Mammary epithelial cell (primary cell): ENCODE measurements at regions of chr14 and their contacts with region 1.

Region 1: GRCh38 chr14:62126879-62127478 is 364.8 kb downstream of the SNAPC1 start:
- DNase-seq: peak; percentile 43
- H3K4me3 ChIP-seq: no peak overlapping the region
- H3K27ac ChIP-seq: no peak overlapping the region
- H3K4me1 ChIP-seq: no peaks in the 10 kb centered on the region
- H3K27me3 ChIP-seq: peaks cover 7% of the 10 kb centered on the region
- CTCF ChIP-seq: peak; percentile 76 to 83

Region 2: GRCh38 chr14:61456720-61457119 is 670.3 kb before region 1 on chr14:
- CTCF ChIA-PET with region 1: no interaction called
- dilution Hi-C with region 1: no loop called
- in situ Hi-C with region 1: loop called (anchors 10 to 25 kb)
- intact Hi-C with region 1: loop called (anchors 1 kb)
- DNase-seq: peak; percentile 49
- H3K4me3 ChIP-seq: no peak overlapping the region
- H3K27ac ChIP-seq: no peak overlapping the region
- H3K4me1 ChIP-seq: peaks cover 10% of the 10 kb centered on the region
- H3K27me3 ChIP-seq: no peaks in the 10 kb centered on the region
- CTCF ChIP-seq: peak; percentile 81 to 85

Region 3: DNA sequence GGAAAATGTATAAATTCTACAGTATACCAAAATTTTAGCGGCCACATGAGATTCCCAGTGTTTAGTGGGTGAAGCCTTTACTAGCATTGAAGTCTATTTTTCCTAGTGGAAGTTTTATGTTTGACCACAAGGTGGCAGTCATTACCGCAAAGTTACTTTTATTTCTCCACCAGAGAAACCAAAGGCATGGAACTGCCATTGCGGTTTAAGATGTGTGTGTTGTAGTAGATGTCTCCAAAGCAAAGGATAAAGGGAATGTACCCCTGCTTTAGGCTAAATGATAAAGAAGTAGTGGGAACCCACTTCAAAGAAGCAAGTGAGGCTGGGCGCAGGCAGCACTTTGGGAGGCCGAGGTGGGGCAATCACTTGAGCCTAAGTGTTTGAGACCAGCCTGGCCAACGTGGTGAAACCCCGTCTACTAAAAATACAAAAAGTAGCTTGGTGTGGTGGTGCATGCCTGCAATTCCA is 665.1 kb before region 1 on chr14:
- CTCF ChIA-PET with region 1: no interaction called
- dilution Hi-C with region 1: no loop called
- in situ Hi-C with region 1: loop called (anchors 10 to 25 kb)
- intact Hi-C with region 1: loop called (anchors 1 kb)
- DNase-seq: peak; percentile 63
- H3K4me3 ChIP-seq: no peak overlapping the region
- H3K27ac ChIP-seq: peak overlapping the region; percentile 28
- H3K4me1 ChIP-seq: peaks cover 37% of the 10 kb centered on the region
- H3K27me3 ChIP-seq: no peaks in the 10 kb centered on the region
- CTCF ChIP-seq: peak; percentile 53 to 59

Region 4: GRCh38 chr14:61797309-61797708 is 329.7 kb before region 1 on chr14:
- CTCF ChIA-PET with region 1: interaction called, 10 read pairs
- dilution Hi-C with region 1: no loop called
- in situ Hi-C with region 1: no loop called
- intact Hi-C with region 1: no loop called
- DNase-seq: no peak
- H3K4me3 ChIP-seq: no peak overlapping the region
- H3K27ac ChIP-seq: no peak overlapping the region
- H3K4me1 ChIP-seq: no peaks in the 10 kb centered on the region
- H3K27me3 ChIP-seq: no peaks in the 10 kb centered on the region
- CTCF ChIP-seq: no peak

Region 5: GRCh38 chr14:61894452-61895077 is 232.4 kb before region 1 on chr14:
- CTCF ChIA-PET with region 1: interaction called, 3 read pairs
- dilution Hi-C with region 1: no loop called
- in situ Hi-C with region 1: loop called in 1 of 2 experiments (anchors 10 kb)
- intact Hi-C with region 1: loop called (anchors 1 kb)
- DNase-seq: peak; percentile 56
- H3K4me3 ChIP-seq: no peak overlapping the region
- H3K27ac ChIP-seq: no peak overlapping the region
- H3K4me1 ChIP-seq: no peaks in the 10 kb centered on the region
- H3K27me3 ChIP-seq: no peaks in the 10 kb centered on the region
- CTCF ChIP-seq: peak; percentile 79 to 84